GM13976 (cell line): ENCODE measurements at regions of chr10 and their contacts with region 1.

Region 1: GRCh38 chr10:2938869-2939268 is 128.5 kb upstream of the PFKP start:
- DNase-seq: no peak
- CTCF ChIP-seq: no peak

Region 2: DNA sequence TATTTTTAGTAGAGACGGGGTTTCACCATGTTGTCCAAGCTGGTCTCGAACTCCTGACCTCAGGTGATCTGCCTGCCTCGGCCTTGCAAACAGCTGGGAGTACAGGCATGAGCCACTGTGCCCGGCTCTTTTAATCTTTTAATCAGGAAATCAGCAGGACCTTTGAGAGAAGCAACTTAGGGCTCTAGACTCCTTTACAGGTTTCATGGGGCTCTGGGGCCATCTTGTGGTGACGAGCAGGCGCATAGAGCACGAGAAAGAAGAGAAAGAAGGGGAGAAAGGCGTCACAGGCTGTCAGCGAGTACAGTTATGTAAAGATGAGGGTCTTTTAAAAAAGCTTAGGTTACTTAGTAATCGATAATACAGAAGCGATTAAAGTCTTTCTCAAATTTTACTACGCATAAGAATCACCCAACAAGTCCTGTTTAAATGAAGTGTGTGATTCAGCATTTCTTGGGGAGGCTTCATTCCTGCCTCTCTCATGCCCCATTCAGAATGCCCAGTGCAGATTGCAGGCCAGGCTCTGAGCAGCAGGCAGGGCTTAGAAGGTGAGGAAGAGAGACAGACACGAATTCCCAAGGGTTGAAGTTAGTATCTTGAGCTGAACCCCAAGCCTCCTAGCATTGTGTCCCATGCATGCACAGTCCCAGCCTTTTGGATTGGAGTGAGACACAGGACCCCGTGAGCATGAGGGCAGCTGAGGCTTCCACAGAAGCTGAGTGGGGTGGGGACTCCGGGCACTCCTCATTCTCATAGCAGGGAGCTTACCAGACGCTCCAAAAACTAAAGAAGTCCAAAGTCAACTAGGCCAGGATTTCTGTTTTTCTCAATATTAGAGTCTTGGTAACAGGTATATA is 104.9 kb after region 1 on chr10:
- in situ Hi-C with region 1: loop called (anchors 10 kb)
- DNase-seq: peak; percentile 77
- CTCF ChIP-seq: peak; percentile 71